Breast epithelium (tissue), 4 donors: ENCODE measurements at regions of chr5 and their contacts with region 1.

Region 1: DNA sequence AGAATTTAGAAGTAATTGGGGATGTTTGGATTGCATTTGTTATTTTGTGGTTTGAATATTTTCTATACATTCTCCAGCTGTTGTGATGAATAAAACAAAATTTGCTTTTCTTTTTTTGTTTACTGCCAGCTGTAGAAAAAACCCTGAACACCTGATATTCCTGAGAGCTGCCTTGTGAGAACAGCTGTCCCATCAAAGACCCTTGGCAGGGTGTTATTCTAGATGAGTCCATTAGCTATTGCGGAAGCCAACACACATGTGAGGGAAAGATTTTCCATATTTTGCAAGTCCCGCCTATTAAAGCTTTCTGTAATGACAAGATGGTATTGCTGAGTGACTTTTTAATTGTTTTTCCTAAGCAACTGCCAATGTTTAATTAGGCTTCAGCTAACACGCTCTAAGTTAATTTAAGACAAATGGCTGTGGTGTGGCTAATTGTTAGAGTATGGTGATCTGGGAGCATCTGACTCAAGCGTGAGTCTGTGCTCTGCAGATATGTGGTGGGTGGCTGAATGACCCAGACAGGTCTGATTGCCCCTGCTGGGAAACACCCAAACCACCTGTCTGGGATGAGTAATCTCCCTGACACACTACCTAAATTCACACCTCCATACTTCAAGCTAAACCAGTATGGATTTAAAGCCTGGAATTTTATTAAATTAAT is 86.5 kb upstream of the PRLR start:
- DNase-seq: no peak
- H3K4me3 ChIP-seq: no peak overlapping the region
- H3K27ac ChIP-seq: no peak overlapping the region
- H3K4me1 ChIP-seq: no peaks in the 10 kb centered on the region
- H3K27me3 ChIP-seq: no peaks in the 10 kb centered on the region
- CTCF ChIP-seq: no peak
- POLR2A ChIP-seq: no peak

Region 2: GRCh38 chr5:35339656-35340055 is 22.9 kb after region 1 on chr5:
- intact Hi-C with region 1: loop called (anchors 1 kb)
- DNase-seq: no peak
- H3K4me3 ChIP-seq: no peak overlapping the region
- H3K27ac ChIP-seq: no peak overlapping the region
- H3K4me1 ChIP-seq: no peaks in the 10 kb centered on the region
- H3K27me3 ChIP-seq: no peaks in the 10 kb centered on the region
- CTCF ChIP-seq: no peak
- POLR2A ChIP-seq: no peak